Ascending aorta (tissue), 2 donors: ENCODE measurements at regions of chr16 and their contacts with region 1.

Region 1: DNA sequence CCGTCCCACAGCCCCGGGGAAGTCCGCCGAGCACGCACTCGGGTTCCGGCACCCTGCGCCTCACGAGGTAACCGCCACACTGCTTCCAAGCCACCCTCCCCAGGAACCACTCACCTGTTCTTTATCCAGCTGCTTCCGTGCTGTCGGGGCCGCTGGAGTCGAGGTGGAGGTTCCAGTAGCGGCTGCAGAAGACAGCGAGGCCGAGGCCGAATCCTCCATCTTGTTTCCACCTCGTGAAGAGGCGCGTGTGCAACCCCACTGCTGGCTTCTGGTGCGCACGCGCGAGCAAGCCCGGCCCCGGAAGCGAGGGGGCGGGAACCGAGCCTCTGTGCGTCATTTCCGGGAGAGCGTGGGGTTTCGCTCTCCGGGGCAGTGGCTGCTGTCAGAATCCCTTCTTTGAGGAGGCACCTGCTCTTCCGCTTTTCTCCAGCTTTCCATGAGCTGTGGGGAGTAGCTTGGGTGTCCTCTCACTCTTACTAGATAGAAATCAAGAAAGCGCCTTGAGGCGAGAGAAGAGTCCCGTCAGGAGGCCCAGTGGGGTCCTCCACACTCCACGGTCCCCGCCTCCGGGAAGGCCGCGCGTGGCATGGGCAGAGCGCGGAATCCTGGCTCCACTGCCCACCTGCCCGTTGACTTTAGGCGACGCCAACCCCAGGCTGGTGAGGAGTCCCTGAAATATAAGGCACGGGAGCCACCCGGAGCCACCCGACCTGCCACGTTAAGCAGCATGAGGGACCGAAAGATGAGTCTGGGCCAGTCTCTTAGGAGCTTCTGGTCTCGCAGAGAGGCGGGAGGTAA is at the start of gene RSL1D1:
- DNase-seq: peak; percentile 62 to 94
- H3K4me3 ChIP-seq: peak within 1 kb of the TSS; percentile 77 to 95
- H3K27ac ChIP-seq: peak within 1 kb of the TSS; percentile 85 to 89
- H3K4me1 ChIP-seq: peaks cover 0 to 24% of the 10 kb centered on the region in 2 donors
- H3K27me3 ChIP-seq: no peaks in the 10 kb centered on the region
- CTCF ChIP-seq: no peak
- total RNA-seq, gene RSL1D1: 160 TPM

Region 2: DNA sequence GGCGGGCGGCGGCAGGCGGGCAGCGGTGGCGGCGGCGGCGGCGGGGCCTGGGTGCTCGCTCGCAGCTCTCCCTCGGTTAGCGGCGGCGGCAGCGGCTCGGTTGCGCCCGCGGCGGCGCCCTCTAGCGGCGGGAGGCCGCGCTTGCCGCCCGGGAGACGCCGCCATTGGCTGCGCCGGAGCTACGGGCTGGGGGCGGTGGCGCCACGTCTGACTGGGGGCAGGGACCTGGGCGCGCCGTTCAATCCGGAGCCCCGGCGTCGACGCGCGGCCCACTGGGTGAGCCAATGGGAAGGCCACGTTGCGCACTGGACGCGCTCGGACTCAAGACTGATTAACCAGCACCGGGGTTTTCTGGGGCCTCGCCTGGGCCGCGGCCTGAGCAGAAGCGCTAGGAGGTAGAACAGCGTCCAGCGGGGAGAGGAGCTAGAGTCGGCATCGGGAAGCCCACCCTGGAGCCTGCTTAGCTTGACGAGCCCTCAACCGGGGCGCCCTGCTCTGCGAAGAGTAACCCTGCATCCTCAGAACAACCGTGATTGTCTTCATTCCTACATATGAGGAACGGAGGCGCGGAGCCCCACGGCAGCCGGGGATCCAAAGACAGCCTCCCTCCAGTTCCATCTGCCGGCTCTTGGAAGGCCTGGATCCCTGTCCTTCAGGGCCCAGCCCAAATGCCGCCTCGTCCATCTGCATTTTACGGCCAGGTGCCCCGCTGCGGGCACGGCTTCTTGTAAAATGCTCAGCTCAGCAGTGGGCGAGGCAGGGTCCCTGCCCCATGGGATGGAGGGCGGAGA is 54.1 kb before region 1 on chr16 and contains the start of gene ZC3H7A:
- intact Hi-C with region 1: loop called (anchors 5 kb)
- DNase-seq: peak; percentile 85 to 98
- H3K4me3 ChIP-seq: peak within 1 kb of the TSS; percentile 70 to 91
- H3K27ac ChIP-seq: peak within 1 kb of the TSS; percentile 97 to 98
- H3K4me1 ChIP-seq: peaks cover 14 to 48% of the 10 kb centered on the region in 2 donors
- H3K27me3 ChIP-seq: no peaks in the 10 kb centered on the region
- CTCF ChIP-seq: peak; percentile 36 to 99 (median 53)
- total RNA-seq, gene ZC3H7A: 56.9 TPM

Region 3: GRCh38 chr16:11816103-11816502 is 35.4 kb before region 1 on chr16:
- intact Hi-C with region 1: no loop called
- DNase-seq: no peak
- H3K4me3 ChIP-seq: no peak overlapping the region
- H3K27ac ChIP-seq: no peak overlapping the region
- H3K4me1 ChIP-seq: no peaks in the 10 kb centered on the region
- H3K27me3 ChIP-seq: no peaks in the 10 kb centered on the region
- CTCF ChIP-seq: no peak

Region 4: GRCh38 chr16:11915644-11916523 is 64.4 kb after region 1 on chr16 and contains the start of gene GSPT1:
- intact Hi-C with region 1: loop called (anchors 1 kb)
- DNase-seq: peak; percentile 97 to 100
- H3K4me3 ChIP-seq: peak within 1 kb of the TSS; percentile 87 to 99
- H3K27ac ChIP-seq: peak within 1 kb of the TSS; percentile 93
- H3K4me1 ChIP-seq: peaks cover 0 to 23% of the 10 kb centered on the region in 2 donors
- H3K27me3 ChIP-seq: no peaks in the 10 kb centered on the region
- CTCF ChIP-seq: no peak
- total RNA-seq, gene GSPT1: 56.3 TPM

Region 5: DNA sequence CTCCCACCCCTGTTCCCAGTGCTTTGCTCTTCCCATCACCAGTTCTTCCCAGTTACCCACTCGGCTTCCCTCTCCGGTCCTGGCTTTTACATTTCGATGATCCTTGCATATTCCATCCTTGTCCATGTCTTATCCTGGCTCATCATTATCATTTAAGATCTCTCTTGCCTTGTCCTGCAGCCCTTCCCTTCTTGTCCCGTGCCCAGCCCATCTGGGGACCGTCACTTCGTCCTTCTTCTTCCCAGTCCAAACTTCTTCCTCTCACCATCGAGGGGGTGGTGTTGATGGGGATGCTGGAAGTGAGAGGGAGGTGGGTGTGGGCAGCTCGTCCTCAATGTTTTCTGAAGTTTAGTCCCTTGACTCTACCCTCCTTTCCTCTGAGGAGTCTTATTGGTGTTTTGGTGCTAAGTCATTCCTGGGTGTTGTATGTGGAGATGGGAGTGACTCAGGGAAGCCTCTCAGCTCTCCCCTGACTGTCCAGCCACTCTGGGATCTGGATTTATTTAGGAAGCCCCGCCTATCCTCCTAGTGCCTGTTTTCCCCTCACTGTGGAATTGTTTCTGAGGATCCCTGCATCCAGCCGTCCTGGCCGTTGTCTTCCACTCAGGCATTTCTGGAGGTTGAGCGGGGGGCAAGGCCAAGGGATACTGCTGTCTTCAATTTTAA is 126.0 kb after region 1 on chr16:
- intact Hi-C with region 1: loop called (anchors 2 kb)
- DNase-seq: peak in 1 of 2 donors; percentile 66
- H3K4me3 ChIP-seq: peak overlapping the region; percentile 78 to 92
- H3K27ac ChIP-seq: peak overlapping the region; percentile 73 to 83
- H3K4me1 ChIP-seq: peaks cover 0 to 8% of the 10 kb centered on the region in 2 donors
- H3K27me3 ChIP-seq: no peaks in the 10 kb centered on the region
- CTCF ChIP-seq: no peak

Region 6: GRCh38 chr16:12062343-12063005 is 211.0 kb after region 1 on chr16:
- intact Hi-C with region 1: loop called (anchors 5 kb)
- DNase-seq: peak; percentile 89 to 98
- H3K4me3 ChIP-seq: no peak overlapping the region
- H3K27ac ChIP-seq: peak overlapping the region; percentile 89 to 94
- H3K4me1 ChIP-seq: peaks cover 7 to 31% of the 10 kb centered on the region in 2 donors
- H3K27me3 ChIP-seq: no peaks in the 10 kb centered on the region
- CTCF ChIP-seq: no peak

Region 7: GRCh38 chr16:12627394-12627793 is 775.9 kb after region 1 on chr16:
- intact Hi-C with region 1: no loop called
- DNase-seq: no peak
- H3K4me3 ChIP-seq: no peak overlapping the region
- H3K27ac ChIP-seq: no peak overlapping the region
- H3K4me1 ChIP-seq: no peaks in the 10 kb centered on the region
- H3K27me3 ChIP-seq: no peaks in the 10 kb centered on the region
- CTCF ChIP-seq: no peak